Activated naive CD4-positive, alpha-beta T cell treated with anti-CD3 and anti-CD28 coated beads for 36 hours (primary cell): ENCODE measurements at regions of chr2 and their contacts with region 1.

Region 1: GRCh38 chr2:6877402-6878304 is at the start of gene RSAD2:
- DNase-seq: peak; percentile 45
- H3K4me3 Mint-ChIP-seq: peak within 1 kb of the TSS; percentile 68
- H3K27ac Mint-ChIP-seq: no peak within 1 kb of the TSS
- H3K4me1 Mint-ChIP-seq: peaks cover 66% of the 10 kb centered on the region
- H3K27me3 Mint-ChIP-seq: no peaks in the 10 kb centered on the region
- total RNA-seq, gene RSAD2: 9.1 to 9.9 TPM

Region 2: DNA sequence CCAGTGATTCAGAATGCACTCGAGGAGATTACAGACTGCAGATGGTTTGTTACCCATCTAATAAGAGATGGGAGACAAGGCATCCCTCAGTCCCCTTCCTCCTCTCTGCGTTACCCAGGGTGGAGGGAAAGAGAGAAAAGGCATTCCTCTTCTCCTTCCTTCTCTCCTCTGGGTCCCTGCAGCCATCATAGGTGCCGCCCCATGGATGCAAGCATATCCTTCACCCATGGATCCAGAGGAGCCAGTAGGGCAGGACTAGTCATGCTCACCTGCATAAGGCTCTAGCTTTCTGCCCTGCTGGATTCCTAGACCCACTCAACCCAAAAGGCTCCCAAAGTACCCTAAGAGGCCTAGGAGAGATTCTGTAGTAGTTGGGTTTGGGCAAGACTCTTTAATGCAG is 32.3 kb before region 1 on chr2:
- CTCF ChIA-PET with region 1: no interaction called
- intact Hi-C with region 1: no loop called
- DNase-seq: peak; percentile 48
- H3K4me3 Mint-ChIP-seq: no peak overlapping the region
- H3K27ac Mint-ChIP-seq: no peak overlapping the region
- H3K4me1 Mint-ChIP-seq: peaks cover 2% of the 10 kb centered on the region
- H3K27me3 Mint-ChIP-seq: no peaks in the 10 kb centered on the region

Region 3: DNA sequence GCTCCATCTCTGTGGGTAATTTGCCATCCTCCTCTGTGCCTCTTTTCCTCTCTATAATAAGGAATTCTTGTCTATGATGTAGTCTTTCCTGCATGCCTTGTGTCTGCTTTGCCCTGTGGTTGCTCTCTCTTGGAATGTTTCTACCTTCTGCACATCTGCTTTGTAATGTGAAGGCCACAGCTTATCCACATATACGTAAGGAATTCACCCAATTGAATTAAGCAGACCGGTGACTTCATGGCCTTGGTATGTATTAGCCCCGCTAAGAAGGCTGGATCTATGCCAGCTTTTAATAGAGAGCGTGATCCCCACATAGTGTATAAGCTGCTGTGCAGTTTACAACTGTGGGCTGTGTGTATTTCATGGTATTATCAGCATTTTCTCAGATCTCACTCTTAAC is 314.3 kb after region 1 on chr2:
- CTCF ChIA-PET with region 1: no interaction called
- intact Hi-C with region 1: loop called (anchors 5 kb)
- DNase-seq: no peak
- H3K4me3 Mint-ChIP-seq: no peak overlapping the region
- H3K27ac Mint-ChIP-seq: no peak overlapping the region
- H3K4me1 Mint-ChIP-seq: peaks cover 15% of the 10 kb centered on the region
- H3K27me3 Mint-ChIP-seq: no peaks in the 10 kb centered on the region